Cardiac septum (tissue), 1 donor: ENCODE measurements at regions of chr5 and their contacts with region 1.

Region 1: GRCh38 chr5:44332285-44332971 is 56.8 kb downstream of the FGF10 start:
- DNase-seq: no peak

Region 2: GRCh38 chr5:43729846-43730478 is 602.5 kb before region 1 on chr5:
- intact Hi-C with region 1: loop called (anchors 5 kb)
- DNase-seq: no peak

Region 3: DNA sequence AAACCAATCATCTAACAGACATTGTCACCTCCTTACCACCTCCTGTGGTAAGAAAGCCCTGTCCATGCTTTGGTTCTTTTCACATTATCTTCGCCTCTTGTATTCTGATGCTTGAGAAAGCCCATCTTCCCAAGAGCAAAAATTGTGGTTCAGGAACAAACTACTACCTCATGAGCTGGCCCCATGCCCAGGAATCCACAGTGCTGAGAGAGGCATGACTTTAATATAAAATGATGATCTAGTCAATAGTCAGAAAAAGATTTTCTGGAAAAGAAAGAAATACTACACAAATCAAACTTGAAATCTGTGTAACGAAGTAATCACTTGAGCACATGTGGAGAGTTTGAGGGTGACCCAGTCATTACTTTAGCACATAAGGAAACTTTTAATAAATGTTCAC is 37.9 kb before region 1 on chr5:
- intact Hi-C with region 1: no loop called
- DNase-seq: no peak

Region 4: GRCh38 chr5:44321144-44321725 is 11.2 kb before region 1 on chr5:
- intact Hi-C with region 1: no loop called
- DNase-seq: no peak